ENCODE measurements at regions of chr11 and their contacts with region 1.

Region 1: DNA sequence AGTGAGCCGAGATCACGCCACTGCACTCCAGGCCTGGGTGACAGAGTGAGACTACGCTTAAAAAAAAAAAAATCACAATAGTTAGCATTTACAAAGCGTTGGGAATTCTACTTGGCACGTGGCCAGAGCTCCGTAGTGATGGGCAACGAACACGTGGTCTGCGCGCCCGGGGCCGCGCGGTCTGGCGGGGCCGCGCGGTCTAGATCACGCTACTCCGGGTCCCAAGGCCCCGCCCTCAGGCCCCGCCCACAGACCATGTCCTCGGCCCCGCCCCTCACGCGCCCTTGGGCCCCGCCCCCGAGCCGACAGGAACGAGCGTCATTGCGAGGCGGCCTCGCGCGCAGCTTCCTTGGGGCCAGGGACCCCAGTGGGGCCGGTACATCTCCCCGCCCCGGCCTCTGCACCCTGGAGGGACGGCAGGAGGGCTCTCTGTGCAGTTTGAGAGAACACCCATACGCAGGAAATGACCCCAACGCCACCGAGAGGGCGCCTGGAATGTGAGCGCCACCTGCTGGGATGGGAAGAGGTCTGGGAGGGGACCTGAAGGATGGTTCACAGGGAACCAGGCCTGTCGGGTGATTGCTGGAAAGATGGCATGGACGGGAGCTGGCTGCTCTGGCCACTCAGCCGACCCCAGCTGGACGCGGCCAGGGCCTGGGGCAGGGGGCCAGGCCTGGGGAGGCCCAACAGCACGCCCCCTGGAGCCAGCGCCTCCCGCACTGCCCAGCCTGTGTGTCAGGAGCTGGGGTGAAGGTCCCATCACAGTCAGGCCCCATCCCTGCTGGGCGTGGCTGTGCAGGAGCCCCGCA is 2.0 kb upstream of the PTDSS2 start:
- DNase-seq: peak; percentile 23
- H3K4me3 ChIP-seq: peak overlapping the region; percentile 52
- H3K27me3 ChIP-seq: peaks cover 3% of the 10 kb centered on the region
- CTCF ChIP-seq: peak; percentile 94

Region 2: GRCh38 chr11:396948-397548 is 51.1 kb before region 1 on chr11:
- CTCF ChIA-PET with region 1: interaction called, 17 read pairs
- POLR2A ChIA-PET with region 1: no interaction called
- DNase-seq: no peak
- H3K4me3 ChIP-seq: peak overlapping the region; percentile 38
- H3K27me3 ChIP-seq: no peaks in the 10 kb centered on the region
- CTCF ChIP-seq: peak; percentile 75

Region 3: DNA sequence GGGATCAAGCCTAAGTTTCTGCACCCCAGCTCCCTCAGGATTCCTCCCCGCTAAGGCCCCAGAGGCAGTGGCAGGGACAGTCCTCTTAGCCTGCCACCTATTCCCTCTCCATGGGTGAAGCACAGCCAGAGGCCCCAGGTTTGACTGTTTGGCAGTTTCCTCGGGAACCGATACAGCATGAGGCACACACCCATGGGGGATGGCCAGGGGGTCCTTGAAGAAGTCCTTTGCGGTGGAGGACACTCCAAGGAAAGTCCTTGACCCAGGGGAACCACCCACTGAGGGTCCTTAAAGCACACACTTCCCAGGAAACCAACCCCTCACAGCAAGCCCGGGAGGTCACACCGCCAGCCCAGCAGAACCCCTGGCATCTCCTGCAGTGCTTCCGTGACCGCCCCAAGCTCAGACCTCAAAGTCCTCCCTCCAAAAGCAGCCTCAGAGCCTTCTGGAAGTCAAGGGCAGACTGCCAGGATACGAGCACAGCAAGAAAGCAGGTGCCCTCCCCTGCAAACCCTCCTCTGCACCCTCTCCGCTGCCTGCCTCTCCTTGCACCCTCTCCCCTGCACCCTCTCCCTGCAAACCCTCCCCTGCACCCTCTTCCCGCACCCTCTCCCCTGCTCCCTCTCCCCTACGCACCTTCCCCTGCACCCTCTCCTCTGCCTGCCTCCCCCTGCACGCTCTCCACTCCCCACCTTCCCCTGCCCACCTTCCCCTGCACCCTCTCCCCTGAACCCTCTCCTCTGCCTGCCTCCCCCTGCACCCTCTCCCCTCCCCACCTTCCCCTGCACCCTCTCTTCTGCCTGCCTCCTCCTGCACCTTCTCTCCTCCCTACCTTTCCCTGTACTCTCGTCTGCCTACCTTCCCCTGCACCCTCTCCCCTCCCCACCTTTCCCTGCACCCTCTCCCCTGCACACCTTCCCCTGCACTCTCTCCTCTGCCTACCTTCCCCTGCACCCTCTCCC is 34.7 kb before region 1 on chr11:
- CTCF ChIA-PET with region 1: interaction called, 10 read pairs
- POLR2A ChIA-PET with region 1: no interaction called
- DNase-seq: no peak
- H3K4me3 ChIP-seq: no peak overlapping the region
- H3K27me3 ChIP-seq: peaks cover 2% of the 10 kb centered on the region
- CTCF ChIP-seq: no peak

Region 4: DNA sequence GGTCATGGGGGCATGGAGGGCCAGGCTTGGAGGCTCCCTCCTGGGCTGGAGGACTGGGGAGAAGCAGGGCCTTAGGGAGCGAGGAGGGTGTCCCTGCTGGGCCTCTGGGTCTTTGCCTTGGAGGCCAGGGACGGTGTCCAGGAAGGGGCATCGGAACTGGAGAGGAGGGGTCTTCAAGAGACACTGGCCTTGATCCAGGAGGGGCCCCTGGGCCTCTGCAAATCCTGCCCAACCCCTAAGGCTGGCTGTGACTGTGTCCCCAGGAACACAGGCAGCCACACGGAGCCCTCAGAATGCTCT is 15.4 kb before region 1 on chr11:
- CTCF ChIA-PET with region 1: no interaction called
- POLR2A ChIA-PET with region 1: no interaction called
- DNase-seq: no peak
- H3K4me3 ChIP-seq: no peak overlapping the region
- H3K27me3 ChIP-seq: no peaks in the 10 kb centered on the region
- CTCF ChIP-seq: no peak

Region 5: GRCh38 chr11:469684-470560 is 21.8 kb after region 1 on chr11:
- CTCF ChIA-PET with region 1: interaction called, 18 read pairs
- POLR2A ChIA-PET with region 1: no interaction called
- DNase-seq: no peak
- H3K4me3 ChIP-seq: 0 out of 2 replicates have a peak overlapping the region, but pooled peaks have one; percentile 10
- H3K27me3 ChIP-seq: no peaks in the 10 kb centered on the region
- CTCF ChIP-seq: peak; percentile 40

Region 6: DNA sequence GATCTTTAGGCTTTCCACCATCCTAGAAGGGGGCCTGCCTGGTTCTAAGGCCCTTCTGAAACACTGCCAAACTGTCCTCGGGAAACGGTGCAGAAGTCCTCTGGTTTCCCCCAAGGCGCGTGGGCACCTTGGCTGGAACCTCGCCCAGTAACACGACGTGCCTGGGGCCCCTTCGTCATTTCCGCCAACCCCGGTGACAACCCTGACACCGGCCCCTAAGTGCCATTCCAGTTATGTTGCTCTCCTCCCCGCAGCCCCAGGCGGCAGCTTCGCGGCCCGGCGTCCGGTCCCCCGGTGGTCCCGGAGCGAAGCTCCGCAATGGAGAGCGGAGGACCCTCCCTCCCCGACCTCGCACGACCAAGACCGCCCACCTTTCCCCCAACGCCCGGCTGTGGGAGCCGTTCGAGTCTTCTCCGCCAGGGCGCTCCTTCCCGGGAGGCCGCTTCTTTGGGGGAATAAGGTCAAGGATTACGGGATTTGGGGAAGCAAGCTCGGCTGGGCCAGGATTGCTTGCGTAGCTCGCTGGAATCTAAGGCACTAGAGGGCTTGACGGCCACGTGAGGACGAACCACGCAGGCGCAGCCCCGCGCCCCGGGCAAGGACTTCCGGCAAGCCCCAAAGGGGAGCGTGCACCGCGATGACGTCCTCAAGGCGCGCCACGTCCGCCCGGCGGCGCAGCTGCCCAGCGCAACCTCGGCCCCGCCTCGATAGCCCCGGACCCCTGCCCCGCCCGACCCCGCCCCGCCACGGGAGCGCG is 58.3 kb after region 1 on chr11:
- CTCF ChIA-PET with region 1: interaction called, 11 read pairs
- POLR2A ChIA-PET with region 1: no interaction called
- DNase-seq: peak; percentile 86
- H3K4me3 ChIP-seq: peak overlapping the region; percentile 96
- H3K27me3 ChIP-seq: no peaks in the 10 kb centered on the region
- CTCF ChIP-seq: 0 out of 2 replicates have a peak, but pooled peaks have one; percentile 4

Region 7: DNA sequence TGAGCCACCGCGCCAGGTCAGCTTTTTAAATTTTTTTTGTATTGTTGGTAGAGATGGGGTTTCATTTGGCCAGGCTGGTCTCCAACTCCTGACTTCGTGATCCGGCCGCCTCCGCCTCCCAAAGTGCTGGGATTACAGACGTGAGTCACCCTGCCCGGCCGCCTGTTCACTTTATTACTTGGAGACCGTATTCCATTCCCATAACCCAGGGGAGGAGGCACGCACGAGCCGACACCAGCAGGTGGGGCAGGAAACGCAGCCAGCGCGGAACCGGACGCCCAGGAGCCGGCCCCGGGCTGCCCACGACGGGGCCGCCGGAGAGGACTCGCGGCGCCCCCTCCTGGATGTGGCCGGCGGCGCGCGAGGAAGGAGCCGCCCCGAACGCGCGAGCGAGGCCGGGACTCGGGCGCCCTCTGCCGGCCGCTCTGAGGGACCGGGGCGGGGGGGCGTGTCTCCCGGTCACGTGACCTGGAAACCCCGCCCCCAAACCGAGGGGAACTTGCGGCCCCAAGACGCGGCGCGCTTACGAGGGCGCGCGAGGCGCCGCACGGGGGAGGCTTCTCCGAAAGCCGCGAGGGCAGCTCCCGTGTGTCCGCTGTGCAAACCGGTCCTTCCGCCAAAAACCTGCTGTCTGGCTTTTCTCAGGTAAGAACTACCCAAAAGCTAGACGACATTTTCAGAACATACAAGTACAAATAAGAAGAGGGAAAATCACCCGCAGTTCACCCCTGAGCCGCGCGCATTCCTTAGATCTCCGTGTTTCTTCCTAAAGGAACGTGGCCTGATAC is 70.5 kb after region 1 on chr11:
- CTCF ChIA-PET with region 1: interaction called, 10 read pairs
- POLR2A ChIA-PET with region 1: no interaction called
- DNase-seq: peak; percentile 94
- H3K4me3 ChIP-seq: peak overlapping the region; percentile 35
- H3K27me3 ChIP-seq: no peaks in the 10 kb centered on the region
- CTCF ChIP-seq: peak; percentile 56

Region 8: GRCh38 chr11:830295-831117 is 382.4 kb after region 1 on chr11:
- CTCF ChIA-PET with region 1: no interaction called
- POLR2A ChIA-PET with region 1: no interaction called
- DNase-seq: no peak
- H3K4me3 ChIP-seq: peak overlapping the region; percentile 30
- H3K27me3 ChIP-seq: no peaks in the 10 kb centered on the region
- CTCF ChIP-seq: no peak

Measured in BJ (cell line).